ENCODE measurements at regions of chr10 and their contacts with region 1.

Region 1: GRCh38 chr10:95445837-95446486 is 115.2 kb downstream of the SORBS1 start:
- DNase-seq: peak; percentile 73
- CTCF ChIP-seq: peak; percentile 86

Region 2: GRCh38 chr10:95097805-95098204 is 348.2 kb before region 1 on chr10:
- CTCF ChIA-PET with region 1: no interaction called
- POLR2A ChIA-PET with region 1: no interaction called
- DNase-seq: no peak
- CTCF ChIP-seq: no peak

Region 3: GRCh38 chr10:95459446-95460045 is 13.6 kb after region 1 on chr10:
- CTCF ChIA-PET with region 1: interaction called, 11 read pairs
- POLR2A ChIA-PET with region 1: no interaction called
- DNase-seq: no peak
- CTCF ChIP-seq: no peak

Region 4: DNA sequence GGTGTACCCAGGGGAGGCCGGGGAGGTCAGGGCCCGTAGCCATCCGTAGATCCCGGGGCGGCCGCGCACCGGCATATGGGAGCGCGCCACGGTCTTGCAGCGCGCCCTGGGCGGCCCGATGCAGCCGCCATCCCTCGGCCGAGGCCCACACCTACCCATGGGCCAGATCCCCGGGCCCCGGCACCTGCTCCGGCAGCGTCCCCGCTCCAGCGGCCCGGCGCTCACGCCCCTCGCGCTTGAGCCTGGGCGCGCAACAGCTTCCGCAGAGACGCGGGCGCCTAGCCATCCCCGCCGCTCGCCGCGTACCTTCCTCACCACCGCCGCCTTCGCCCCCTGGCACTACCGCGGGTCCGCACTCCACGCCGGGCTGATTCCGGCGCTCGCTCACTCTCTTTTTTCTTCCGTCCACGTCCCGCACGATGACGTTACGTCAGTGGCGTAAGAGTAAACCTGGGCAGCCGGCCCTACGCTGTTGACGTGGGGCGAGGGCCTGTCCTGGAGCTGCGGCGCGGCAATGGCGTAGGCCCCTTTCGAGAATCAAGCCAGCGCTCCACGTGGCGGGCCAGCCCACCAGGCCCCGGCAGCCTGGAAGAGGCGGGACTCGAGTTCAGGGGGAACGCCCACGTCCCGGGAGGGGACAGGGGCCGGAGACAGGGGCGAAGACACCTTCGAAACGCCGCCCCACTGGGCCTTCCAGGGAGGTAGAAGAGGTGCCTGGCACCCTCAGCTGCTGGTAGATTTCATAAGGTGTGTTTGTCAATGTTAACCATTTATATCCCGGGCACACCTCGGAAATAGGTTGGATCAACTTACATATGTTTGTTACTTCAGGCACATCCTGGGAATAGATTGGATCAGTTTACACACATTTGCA is 210.6 kb after region 1 on chr10 and contains the start of gene ALDH18A1:
- CTCF ChIA-PET with region 1: no interaction called
- POLR2A ChIA-PET with region 1: no interaction called
- DNase-seq: peak; percentile 95
- CTCF ChIP-seq: no peak

Region 5: GRCh38 chr10:95755511-95756004 is 309.6 kb after region 1 on chr10:
- CTCF ChIA-PET with region 1: no interaction called
- POLR2A ChIA-PET with region 1: no interaction called
- DNase-seq: peak; percentile 66
- CTCF ChIP-seq: no peak

Region 6: DNA sequence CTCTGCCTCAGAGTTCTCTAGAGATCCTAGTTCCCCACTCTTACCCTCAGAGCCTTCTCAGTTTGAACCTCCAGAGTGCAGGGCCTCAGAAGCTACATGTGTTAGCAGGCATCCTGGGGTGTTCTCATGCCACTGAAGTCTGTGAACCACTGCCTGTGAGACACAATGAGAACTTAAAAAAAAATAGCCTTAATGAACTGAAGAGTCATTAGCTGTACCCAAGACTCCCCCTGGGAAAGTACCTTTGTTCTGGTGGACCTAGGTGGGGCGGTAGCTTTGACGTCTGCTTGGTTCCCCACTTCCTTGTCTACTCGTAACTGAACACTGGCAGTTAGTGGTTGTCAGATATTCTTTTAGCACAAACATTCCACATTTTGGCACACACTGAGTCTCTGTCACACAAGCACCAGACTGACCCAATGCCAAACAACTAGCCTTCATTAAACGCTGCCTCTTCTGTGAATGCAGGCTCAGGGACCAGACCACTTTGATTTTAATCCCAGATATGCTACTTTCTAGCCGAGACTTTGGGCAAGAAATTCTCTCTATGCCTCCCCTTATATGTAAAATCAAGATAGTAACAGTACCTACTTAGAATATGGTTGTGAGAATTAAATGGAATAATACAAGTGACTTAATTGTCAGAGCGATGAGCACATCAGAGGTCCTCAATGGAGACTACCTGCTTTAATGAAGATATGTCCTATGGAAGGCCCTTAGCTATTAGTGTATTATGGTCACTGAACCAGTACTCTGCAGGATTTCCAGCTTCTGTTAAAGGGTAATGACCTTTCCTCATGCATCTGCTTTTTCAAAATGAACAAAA is 386.5 kb after region 1 on chr10:
- CTCF ChIA-PET with region 1: no interaction called
- POLR2A ChIA-PET with region 1: no interaction called
- DNase-seq: peak; percentile 67
- CTCF ChIP-seq: no peak

Measured in GM10248 (cell line).